Activated CD4-positive, alpha-beta memory T cell treated with anti-CD3 and anti-CD28 coated beads, Interleukin-2, amount 10 ng/mL, durations not matched to agents 7 days and 5 days (primary cell): ENCODE measurements at regions of chr15 and their contacts with region 1.

Region 1: GRCh38 chr15:90320061-90320884 is 31.8 kb upstream of the ZNF774 start:
- DNase-seq: peak; percentile 77
- H3K4me3 Mint-ChIP-seq: no peak overlapping the region
- H3K27ac Mint-ChIP-seq: no peak overlapping the region
- H3K4me1 Mint-ChIP-seq: peaks cover 7% of the 10 kb centered on the region
- H3K27me3 Mint-ChIP-seq: no peaks in the 10 kb centered on the region

Region 2: DNA sequence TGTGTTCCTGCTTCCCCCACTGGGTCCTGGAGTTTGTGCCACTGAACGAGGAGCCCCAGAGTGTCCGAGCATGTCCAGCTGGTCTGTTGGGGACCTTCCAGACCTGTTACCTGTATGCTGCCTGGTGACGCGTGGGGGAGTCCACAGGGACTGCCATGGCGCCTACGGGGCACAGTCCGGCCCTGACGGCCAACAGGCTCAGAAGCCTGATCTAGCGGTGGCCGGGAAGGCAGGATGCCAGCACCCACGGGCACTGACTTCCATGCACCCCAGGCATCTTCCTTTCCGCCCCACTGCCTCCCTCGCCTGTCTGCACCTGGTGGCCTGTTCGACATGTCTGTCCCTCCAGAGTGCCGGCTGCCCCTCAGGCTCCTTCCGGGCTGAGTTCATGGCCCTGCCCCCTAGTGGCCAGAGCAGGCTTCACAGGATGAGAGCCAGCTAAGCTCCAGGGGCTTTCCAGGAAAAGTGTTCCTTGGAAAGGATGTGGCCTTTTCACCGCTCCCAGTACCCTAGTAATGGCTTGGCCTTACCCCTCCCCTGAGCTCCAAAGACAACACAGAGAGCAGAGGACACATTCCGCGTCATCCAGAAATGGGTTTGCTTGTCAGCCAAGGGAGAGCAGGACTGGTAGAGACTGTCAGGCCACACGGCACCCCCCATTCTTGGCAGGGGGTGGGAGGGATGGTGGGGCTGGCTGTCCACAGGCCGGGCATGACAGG is 19.1 kb before region 1 on chr15:
- CTCF ChIA-PET with region 1: interaction called, 23 read pairs
- POLR2A ChIA-PET with region 1: no interaction called
- DNase-seq: peak; percentile 66
- H3K4me3 Mint-ChIP-seq: no peak overlapping the region
- H3K27ac Mint-ChIP-seq: no peak overlapping the region
- H3K4me1 Mint-ChIP-seq: peaks cover 40% of the 10 kb centered on the region
- H3K27me3 Mint-ChIP-seq: peaks cover under 1% of the 10 kb centered on the region

Region 3: DNA sequence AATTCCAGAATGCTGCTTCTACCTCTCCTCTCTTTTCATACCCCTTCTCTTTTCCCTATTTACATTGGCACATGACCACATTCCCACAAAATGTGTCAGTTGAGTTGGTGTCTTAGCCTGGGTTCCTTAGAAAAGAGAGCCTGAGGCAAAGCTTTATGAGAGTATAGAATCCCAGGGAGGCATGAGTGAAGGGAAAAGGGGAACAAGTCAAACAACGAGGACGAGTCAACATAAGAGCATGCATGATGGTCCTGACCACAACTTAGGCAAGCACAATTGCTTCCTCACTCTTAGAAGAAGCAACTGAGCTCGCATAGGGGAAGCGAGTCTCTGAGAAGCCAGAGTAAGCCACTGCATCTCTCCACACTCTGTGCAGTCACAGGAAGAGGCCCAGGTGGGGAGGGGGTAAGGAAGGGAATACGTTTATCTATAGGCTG is 16.4 kb after region 1 on chr15:
- CTCF ChIA-PET with region 1: interaction called, 13 read pairs
- POLR2A ChIA-PET with region 1: no interaction called
- DNase-seq: no peak
- H3K4me3 Mint-ChIP-seq: no peak overlapping the region
- H3K27ac Mint-ChIP-seq: peak overlapping the region; percentile 10
- H3K4me1 Mint-ChIP-seq: peaks cover 8% of the 10 kb centered on the region
- H3K27me3 Mint-ChIP-seq: no peaks in the 10 kb centered on the region

Region 4: DNA sequence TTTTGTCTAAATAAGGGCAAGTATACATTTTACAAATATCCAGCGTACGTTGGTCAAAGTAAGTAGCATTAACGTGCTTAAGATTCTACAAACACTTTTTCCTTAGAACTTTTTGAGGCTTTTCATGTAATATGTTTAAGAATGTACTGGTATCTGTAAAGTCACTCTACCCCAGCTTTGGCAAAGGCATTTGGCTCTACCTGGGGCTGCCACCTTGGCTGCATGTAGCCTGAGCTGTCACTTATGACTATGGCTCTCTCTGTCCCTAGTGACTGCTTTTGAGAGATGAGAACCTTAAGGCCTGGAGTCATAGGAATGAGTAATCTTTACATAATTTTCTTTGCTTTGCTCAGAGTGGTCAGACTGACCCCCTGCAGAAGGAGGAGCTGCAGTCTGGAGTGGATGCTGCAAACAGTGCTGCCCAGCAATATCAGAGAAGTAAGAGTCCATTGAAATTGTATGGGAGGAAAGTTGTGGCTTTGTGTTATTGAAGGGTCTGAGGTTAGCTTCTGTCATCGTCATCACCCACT is 129.0 kb after region 1 on chr15:
- CTCF ChIA-PET with region 1: interaction called, 10 read pairs
- POLR2A ChIA-PET with region 1: no interaction called
- DNase-seq: no peak
- H3K4me3 Mint-ChIP-seq: no peak overlapping the region
- H3K27ac Mint-ChIP-seq: no peak overlapping the region
- H3K4me1 Mint-ChIP-seq: peaks cover 5% of the 10 kb centered on the region
- H3K27me3 Mint-ChIP-seq: no peaks in the 10 kb centered on the region

Region 5: GRCh38 chr15:90482124-90483011 is 162.1 kb after region 1 on chr15:
- CTCF ChIA-PET with region 1: interaction called, 107 read pairs
- POLR2A ChIA-PET with region 1: interaction called, 9 read pairs
- DNase-seq: peak; percentile 53
- H3K4me3 Mint-ChIP-seq: no peak overlapping the region
- H3K27ac Mint-ChIP-seq: peak overlapping the region; percentile 23
- H3K4me1 Mint-ChIP-seq: peaks cover 49% of the 10 kb centered on the region
- H3K27me3 Mint-ChIP-seq: no peaks in the 10 kb centered on the region